PC-3 (cell line): ENCODE measurements at regions of chr18 and their contacts with region 1.

Region 1: DNA sequence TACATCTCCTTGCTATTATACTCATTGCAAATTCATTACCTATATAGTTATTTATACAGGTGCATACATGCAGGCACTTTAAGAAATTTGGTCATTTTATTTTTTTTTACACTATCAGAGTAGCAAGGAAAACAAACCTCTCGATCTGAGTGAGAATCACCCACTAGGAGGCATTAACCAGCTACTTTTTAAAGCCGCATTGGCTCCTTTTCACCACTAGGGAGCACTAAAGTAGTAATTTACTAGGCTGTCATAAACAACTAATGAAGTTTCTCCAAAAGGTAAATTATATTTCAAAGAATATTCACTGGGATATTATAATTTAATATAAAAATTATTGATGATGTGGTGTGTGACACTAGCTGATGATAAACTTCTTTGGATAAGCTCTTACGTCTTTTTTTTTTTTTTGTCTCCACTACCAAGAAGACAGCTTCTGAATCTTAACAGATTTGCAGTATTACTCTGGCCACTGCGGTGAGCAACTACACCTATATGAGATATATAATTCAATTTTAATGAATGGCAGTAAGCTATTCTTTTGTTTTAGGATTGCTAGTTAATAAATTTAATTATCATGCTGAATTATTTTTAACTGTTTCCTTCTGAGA is 101.9 kb downstream of the NOL4 start:
- DNase-seq: peak; percentile 67
- ATAC-seq: peak; percentile 43
- H3K4me3 ChIP-seq: no peak overlapping the region
- H3K27ac ChIP-seq: no peak overlapping the region
- H3K4me1 ChIP-seq: peaks cover 16% of the 10 kb centered on the region
- H3K27me3 ChIP-seq: no peaks in the 10 kb centered on the region
- CTCF ChIP-seq: peak; percentile 72

Region 2: DNA sequence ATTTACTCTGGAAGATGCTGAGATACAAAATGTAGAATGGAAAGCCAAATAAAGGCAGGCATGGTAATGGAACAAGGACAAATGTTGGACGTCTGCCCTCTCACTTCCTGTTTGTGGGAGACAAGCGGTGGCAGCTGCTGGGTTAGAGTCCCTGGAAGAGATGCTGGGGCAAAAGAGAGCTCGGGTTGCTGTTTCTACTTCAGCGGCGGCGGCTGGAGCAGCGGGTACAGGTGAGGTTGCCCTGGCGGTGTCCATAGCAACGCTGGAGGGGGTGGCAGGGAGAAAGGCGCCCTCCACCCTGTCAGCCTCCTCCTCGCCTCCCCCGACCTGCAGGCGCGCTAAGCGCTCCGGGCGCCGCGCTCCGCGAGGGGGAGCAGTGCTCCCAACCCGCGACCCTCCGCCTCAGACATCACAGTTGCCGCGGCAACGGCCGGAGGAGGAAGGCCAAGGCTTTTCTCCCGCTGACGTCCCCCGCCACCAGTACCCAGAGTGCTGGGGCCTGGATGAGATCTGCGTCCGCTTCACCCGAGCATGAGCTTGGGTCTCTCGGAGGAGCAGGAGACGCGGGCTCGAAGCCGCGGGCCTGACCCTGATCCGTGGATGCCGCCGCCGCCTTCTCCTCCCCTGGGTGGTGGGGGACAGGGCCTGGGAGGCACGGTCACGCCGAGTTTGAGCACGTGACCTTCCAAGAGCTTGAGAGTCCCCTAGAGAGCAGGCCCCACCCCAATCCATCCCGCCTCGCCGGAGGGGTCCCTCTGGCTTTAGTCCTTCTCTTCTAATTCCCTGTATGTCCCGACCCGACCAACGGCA is 36.3 kb after region 1 on chr18:
- CTCF ChIA-PET with region 1: no interaction called
- POLR2A ChIA-PET with region 1: no interaction called
- intact Hi-C with region 1: no loop called
- DNase-seq: no peak
- ATAC-seq: no peak
- H3K4me3 ChIP-seq: no peak overlapping the region
- H3K27ac ChIP-seq: no peak overlapping the region
- H3K4me1 ChIP-seq: no peaks in the 10 kb centered on the region
- H3K27me3 ChIP-seq: no peaks in the 10 kb centered on the region
- CTCF ChIP-seq: no peak

Region 3: GRCh38 chr18:34212511-34212910 is 89.7 kb after region 1 on chr18:
- CTCF ChIA-PET with region 1: no interaction called
- POLR2A ChIA-PET with region 1: no interaction called
- intact Hi-C with region 1: no loop called
- DNase-seq: no peak
- ATAC-seq: no peak
- H3K4me3 ChIP-seq: no peak overlapping the region
- H3K27ac ChIP-seq: no peak overlapping the region
- H3K4me1 ChIP-seq: no peaks in the 10 kb centered on the region
- H3K27me3 ChIP-seq: no peaks in the 10 kb centered on the region
- CTCF ChIP-seq: no peak

Region 4: GRCh38 chr18:34224423-34225217 is 101.8 kb after region 1 on chr18 and contains the start of gene NOL4:
- CTCF ChIA-PET with region 1: no interaction called
- POLR2A ChIA-PET with region 1: no interaction called
- intact Hi-C with region 1: loop called (anchors 10 kb)
- DNase-seq: peak; percentile 36
- ATAC-seq: peak; percentile 64
- H3K4me3 ChIP-seq: peak within 1 kb of the TSS; percentile 66
- H3K27ac ChIP-seq: no peak within 1 kb of the TSS
- H3K4me1 ChIP-seq: peaks cover 3% of the 10 kb centered on the region; the same call in 1 of the 2 replicates
- H3K27me3 ChIP-seq: peaks cover 46% of the 10 kb centered on the region
- CTCF ChIP-seq: peak; percentile 48
- total RNA-seq, gene NOL4: not detected in 2 replicates

Region 5: DNA sequence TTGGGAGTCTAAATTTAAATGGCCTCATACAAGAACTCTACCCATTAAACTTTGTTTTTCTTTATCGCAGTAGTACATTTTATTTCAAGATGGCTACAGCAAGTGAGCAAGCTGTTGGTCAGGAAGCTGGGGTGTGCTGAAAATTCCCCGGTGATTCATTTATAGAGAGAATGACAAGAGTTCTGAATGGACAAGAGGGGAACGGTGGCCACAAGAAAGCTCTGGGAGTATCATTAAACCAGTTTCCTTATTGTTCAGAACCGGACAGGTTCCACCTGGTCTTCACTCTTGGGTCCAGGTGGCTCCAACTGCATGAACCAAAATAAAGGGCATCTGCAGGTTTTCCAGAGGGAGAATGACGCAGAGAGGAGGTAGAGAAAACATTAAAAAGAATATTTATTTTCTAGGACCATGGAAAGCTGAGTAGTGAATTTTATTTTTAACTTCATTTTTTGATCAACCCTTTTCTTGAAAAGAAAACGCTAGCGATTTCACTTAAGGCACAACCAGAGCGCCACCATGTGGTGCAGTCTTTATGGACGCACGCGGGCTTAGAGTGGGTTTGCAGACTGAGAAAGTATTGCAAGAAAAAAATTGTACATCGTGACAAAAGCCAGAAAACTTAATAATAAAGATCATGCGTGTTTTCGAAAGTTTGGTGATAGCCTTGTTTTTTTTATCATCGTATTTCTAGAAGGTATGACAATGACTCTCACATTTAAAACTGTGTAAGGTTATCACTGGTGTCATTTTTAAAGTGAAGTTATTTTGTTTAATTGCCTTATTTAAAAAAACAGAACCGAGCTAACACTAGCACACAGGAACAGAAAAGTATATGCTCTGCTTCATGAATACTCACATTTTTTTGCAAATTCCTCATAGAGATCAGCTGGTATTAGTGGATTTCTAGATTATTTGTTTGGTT is 199.8 kb after region 1 on chr18:
- CTCF ChIA-PET with region 1: interaction called, 3 read pairs
- POLR2A ChIA-PET with region 1: no interaction called
- intact Hi-C with region 1: loop called (anchors 2 kb)
- DNase-seq: peak; percentile 41
- ATAC-seq: no peak
- H3K4me3 ChIP-seq: no peak overlapping the region
- H3K27ac ChIP-seq: no peak overlapping the region
- H3K4me1 ChIP-seq: no peaks in the 10 kb centered on the region
- H3K27me3 ChIP-seq: no peaks in the 10 kb centered on the region
- CTCF ChIP-seq: peak; percentile 58

Region 6: DNA sequence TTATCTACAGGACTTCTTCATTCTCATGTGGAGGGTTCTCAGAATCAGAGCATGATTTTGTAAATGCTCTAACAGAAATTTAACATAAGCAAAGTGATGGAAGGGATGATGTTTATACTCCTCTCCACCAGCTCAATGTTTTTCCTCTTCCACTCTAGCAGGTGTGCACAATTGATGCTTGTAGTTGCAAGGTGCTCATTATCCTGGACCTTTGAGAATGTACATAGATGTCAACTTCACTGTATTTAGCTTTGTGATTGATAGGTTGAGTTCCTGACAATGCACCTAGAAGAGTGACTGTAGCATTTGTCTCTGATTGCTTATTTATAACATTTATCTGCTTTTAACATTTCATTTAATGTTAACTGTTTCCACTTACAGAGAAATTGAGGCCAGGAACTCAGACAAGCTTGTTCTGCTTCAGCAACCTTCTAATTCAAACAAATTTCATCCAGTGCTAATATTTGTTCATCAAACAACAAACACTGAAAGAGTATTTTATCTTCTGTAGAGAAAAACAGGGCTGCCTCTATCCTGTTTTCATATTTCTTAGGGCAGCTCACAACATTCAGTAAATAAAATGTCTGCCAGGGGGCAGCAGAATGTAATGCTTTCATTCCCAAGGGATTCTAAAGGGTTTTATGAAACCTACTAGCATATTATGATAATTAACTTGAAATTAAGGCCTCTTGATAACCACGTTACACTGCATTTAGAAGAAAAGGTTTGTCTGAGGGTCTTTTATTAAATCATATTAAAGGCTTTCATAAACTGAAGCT is 229.7 kb after region 1 on chr18:
- CTCF ChIA-PET with region 1: interaction called, 7 read pairs
- POLR2A ChIA-PET with region 1: no interaction called
- intact Hi-C with region 1: loop called (anchors 10 kb)
- DNase-seq: peak; percentile 45
- ATAC-seq: peak; percentile 51
- H3K4me3 ChIP-seq: no peak overlapping the region
- H3K27ac ChIP-seq: no peak overlapping the region
- H3K4me1 ChIP-seq: 0 out of 2 replicates have a peak, but pooled peaks cover 3% of the 10 kb centered on the region
- H3K27me3 ChIP-seq: no peaks in the 10 kb centered on the region
- CTCF ChIP-seq: peak; percentile 56

Region 7: DNA sequence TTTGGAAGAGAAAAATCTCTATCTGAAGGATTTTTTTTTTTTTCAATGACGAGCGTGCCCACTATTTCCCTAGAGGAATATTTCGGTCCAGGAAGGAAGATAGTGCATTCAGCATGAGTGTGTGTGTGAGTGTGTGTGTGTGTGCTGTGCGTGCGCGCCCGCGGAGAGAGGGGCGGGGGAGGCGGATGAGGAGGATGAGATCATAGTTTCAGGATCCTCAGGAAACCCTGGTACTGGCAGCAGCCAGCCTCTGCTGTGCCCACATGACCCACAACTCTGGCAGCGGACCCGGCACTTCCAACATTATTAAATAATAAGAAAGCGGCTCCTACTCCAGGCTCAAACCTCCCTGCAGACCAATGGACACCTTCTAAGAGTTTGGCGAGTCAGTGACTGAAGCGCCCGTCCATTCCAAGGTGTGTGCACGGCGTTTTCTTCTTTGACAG is 370.3 kb after region 1 on chr18:
- CTCF ChIA-PET with region 1: no interaction called
- POLR2A ChIA-PET with region 1: no interaction called
- intact Hi-C with region 1: loop called (anchors 5 kb)
- DNase-seq: peak; percentile 64
- ATAC-seq: peak; percentile 75
- H3K4me3 ChIP-seq: peak overlapping the region; percentile 70
- H3K27ac ChIP-seq: peak overlapping the region; percentile 79
- H3K4me1 ChIP-seq: peaks cover 6% of the 10 kb centered on the region; the same call in 1 of the 2 replicates
- H3K27me3 ChIP-seq: no peaks in the 10 kb centered on the region
- CTCF ChIP-seq: no peak

Region 8: DNA sequence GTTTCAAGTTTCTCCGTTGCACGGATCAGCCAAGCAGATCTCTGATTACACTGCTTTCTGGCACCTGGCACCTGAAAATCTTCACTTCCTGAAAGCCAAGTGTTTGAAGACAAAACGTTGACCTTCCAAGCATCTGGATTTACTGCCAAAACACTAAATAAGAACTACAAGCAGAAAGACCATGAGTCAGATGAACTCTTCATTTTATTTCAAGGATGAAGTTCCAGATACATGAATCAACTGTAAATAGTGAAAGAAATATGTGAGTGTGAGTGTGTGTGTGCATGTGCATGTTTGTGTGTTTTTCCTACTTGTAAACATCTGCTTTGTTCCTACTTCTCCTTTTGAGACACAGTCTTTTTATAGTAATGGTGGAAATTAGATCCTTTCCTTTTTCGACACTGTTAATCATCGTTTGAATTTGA is 527.3 kb after region 1 on chr18:
- CTCF ChIA-PET with region 1: no interaction called
- POLR2A ChIA-PET with region 1: no interaction called
- intact Hi-C with region 1: loop called (anchors 5 kb)
- DNase-seq: peak; percentile 62
- ATAC-seq: peak; percentile 77
- H3K4me3 ChIP-seq: peak overlapping the region; percentile 24; the same call in 1 of the 2 replicates
- H3K27ac ChIP-seq: peak overlapping the region; percentile 41
- H3K4me1 ChIP-seq: peaks cover 22% of the 10 kb centered on the region
- H3K27me3 ChIP-seq: no peaks in the 10 kb centered on the region
- CTCF ChIP-seq: no peak

Region 9: GRCh38 chr18:34787931-34788532 is 665.2 kb after region 1 on chr18:
- CTCF ChIA-PET with region 1: no interaction called
- POLR2A ChIA-PET with region 1: no interaction called
- intact Hi-C with region 1: loop called (anchors 2 kb)
- DNase-seq: peak; percentile 58
- ATAC-seq: no peak
- H3K4me3 ChIP-seq: no peak overlapping the region
- H3K27ac ChIP-seq: no peak overlapping the region
- H3K4me1 ChIP-seq: no peaks in the 10 kb centered on the region
- H3K27me3 ChIP-seq: no peaks in the 10 kb centered on the region
- CTCF ChIP-seq: peak; percentile 58